Dendritic cell treated with granulocyte-macrophage colony-stimulating factor and Interleukin-4, amounts not matched to agents 40 ng/mL and 50 ng/mL, for 4 days (primary cell): ENCODE measurements at regions of chr5 and their contacts with region 1.

Region 1: DNA sequence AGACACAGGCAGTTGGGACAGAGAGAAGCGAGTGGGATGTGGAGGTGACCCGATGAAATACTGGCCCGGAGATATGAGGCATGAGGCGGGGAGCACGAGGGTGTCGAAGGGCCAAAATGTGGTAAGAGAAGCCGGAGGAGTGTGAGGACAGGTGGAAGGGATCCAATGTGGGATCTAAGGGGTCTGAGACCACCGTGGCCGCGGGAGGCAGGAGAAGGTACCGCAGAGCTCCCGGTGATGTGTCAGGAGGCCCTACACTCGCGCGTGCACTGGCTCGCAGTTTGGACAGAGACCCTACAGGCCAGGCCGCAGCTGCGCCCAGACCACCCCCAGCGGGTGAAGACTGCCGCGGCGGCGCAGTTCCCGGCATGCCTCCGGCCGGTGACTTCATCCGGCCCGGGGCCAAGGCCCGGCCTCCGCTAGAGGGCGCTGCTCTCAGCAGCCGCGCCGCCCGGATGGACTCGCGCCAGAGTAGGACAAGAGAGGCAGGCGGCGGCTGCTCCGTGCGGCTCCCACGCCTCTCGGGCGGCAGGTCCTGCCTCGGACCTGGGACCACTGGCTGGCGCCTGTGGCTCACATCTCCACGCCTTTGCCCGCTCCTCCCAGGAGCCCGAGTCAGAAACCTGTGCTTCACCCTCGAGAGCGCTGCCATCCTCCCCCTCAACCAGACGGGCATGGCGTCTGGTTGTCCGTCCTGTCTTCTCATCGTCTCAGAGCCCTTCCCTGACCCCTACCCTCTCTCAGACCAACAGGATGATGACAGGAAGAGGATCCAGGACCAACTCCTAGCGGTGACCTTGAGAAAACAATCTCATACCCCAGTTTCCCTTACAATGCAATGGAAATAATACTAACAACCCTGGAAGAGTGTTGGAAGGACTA is 35.4 kb upstream of the STING1 start:
- H3K4me3 Mint-ChIP-seq: peak overlapping the region; percentile 89
- H3K27ac Mint-ChIP-seq: peak overlapping the region; percentile 88
- H3K4me1 Mint-ChIP-seq: peaks cover 24% of the 10 kb centered on the region
- H3K27me3 Mint-ChIP-seq: peaks cover 5% of the 10 kb centered on the region

Region 2: GRCh38 chr5:139422307-139422893 is 95.5 kb before region 1 on chr5:
- intact Hi-C with region 1: loop called (anchors 1 kb)
- H3K4me3 Mint-ChIP-seq: no peak overlapping the region
- H3K27ac Mint-ChIP-seq: no peak overlapping the region
- H3K4me1 Mint-ChIP-seq: peaks cover 6% of the 10 kb centered on the region
- H3K27me3 Mint-ChIP-seq: no peaks in the 10 kb centered on the region

Region 3: GRCh38 chr5:139474890-139475791 is 42.8 kb before region 1 on chr5:
- intact Hi-C with region 1: loop called (anchors 5 kb)
- H3K4me3 Mint-ChIP-seq: no peak overlapping the region
- H3K27ac Mint-ChIP-seq: peak overlapping the region; percentile 4
- H3K4me1 Mint-ChIP-seq: peaks cover 66% of the 10 kb centered on the region
- H3K27me3 Mint-ChIP-seq: peaks cover 5% of the 10 kb centered on the region

Region 4: GRCh38 chr5:139560752-139561654 is 43.1 kb after region 1 on chr5 and contains the start of gene UBE2D2:
- intact Hi-C with region 1: loop called (anchors 2 kb)
- H3K4me3 Mint-ChIP-seq: peak within 1 kb of the TSS; percentile 95
- H3K27ac Mint-ChIP-seq: peak within 1 kb of the TSS; percentile 96
- H3K4me1 Mint-ChIP-seq: peaks cover 37% of the 10 kb centered on the region
- H3K27me3 Mint-ChIP-seq: no peaks in the 10 kb centered on the region